Naive thymus-derived CD4-positive, alpha-beta T cell (primary cell): ENCODE measurements at regions of chr17 and their contacts with region 1.

Region 1: DNA sequence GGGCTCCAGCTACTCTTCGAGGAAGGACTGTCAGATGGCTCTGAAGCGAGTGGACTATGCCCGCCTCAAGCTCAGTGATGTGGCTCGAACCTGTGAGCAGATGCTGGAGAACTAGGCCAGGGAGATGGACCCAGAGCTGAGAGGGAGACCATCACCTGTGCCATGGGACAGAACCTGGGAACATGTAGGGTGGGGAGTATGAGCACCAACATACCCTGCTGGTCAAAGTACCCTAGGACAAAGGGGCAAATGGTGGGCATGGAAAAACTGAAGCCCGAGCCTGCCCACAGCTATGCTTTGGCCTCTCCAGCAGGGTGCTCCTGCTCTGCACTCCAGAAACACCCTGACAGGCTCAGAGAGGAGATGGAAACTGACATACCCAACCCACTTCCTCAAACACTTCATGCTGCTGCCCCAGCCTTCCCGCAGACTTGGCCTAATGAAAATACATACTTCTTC is 1.9 kb downstream of the MED11 start:
- DNase-seq: no peak
- ATAC-seq: peak; percentile 40
- H3K4me3 ChIP-seq: no peak overlapping the region
- H3K4me3 Mint-ChIP-seq: peak overlapping the region in 8 of 10 donors; percentile 8 to 99 (median 44)
- H3K27ac ChIP-seq: no peak overlapping the region
- H3K27ac Mint-ChIP-seq: peak overlapping the region in 4 of 9 donors; percentile 25 to 55 (median 44)
- H3K4me1 ChIP-seq: peaks cover 10 to 14% of the 10 kb centered on the region in 2 donors
- H3K4me1 Mint-ChIP-seq: peaks cover 4 to 39% (median 28%) of the 10 kb centered on the region in 7 donors
- H3K27me3 ChIP-seq: no peaks in the 10 kb centered on the region
- H3K27me3 Mint-ChIP-seq: peaks cover 0 to 6% (median 0%) of the 10 kb centered on the region in 5 donors

Region 2: GRCh38 chr17:4554997-4555799 is 177.9 kb before region 1 on chr17 and contains the start of gene MYBBP1A:
- CTCF ChIA-PET with region 1: no interaction called
- POLR2A ChIA-PET with region 1: no interaction called
- intact Hi-C with region 1: loop called in 1 of 2 experiments (anchors 1 kb)
- DNase-seq: peak; percentile 92 to 98 (median 95)
- ATAC-seq: peak; percentile 96
- H3K4me3 ChIP-seq: peak within 1 kb of the TSS; percentile 87
- H3K4me3 Mint-ChIP-seq: peak within 1 kb of the TSS; percentile 87 to 97 (median 95)
- H3K27ac ChIP-seq: peak within 1 kb of the TSS; percentile 79
- H3K27ac Mint-ChIP-seq: peak within 1 kb of the TSS; percentile 88 to 98 (median 96)
- H3K4me1 ChIP-seq: peaks cover 20% of the 10 kb centered on the region in 2 donors
- H3K4me1 Mint-ChIP-seq: peaks cover 16 to 34% (median 27%) of the 10 kb centered on the region in 7 donors
- H3K27me3 ChIP-seq: no peaks in the 10 kb centered on the region
- H3K27me3 Mint-ChIP-seq: no peaks in the 10 kb centered on the region
- total RNA-seq, gene MYBBP1A: 59.8 to 81.8 (median 77.9) TPM

Region 3: GRCh38 chr17:4789901-4790704 is 57.0 kb after region 1 on chr17:
- CTCF ChIA-PET with region 1: interaction called, 10 read pairs
- POLR2A ChIA-PET with region 1: interaction called, 9 read pairs
- intact Hi-C with region 1: loop called (anchors 1 kb)
- DNase-seq: peak; percentile 66 to 87 (median 78)
- ATAC-seq: peak; percentile 93
- H3K4me3 ChIP-seq: peak overlapping the region; percentile 75
- H3K4me3 Mint-ChIP-seq: peak overlapping the region; percentile 67 to 94 (median 88)
- H3K27ac ChIP-seq: peak overlapping the region; percentile 73
- H3K27ac Mint-ChIP-seq: peak overlapping the region; percentile 1 to 93 (median 89)
- H3K4me1 ChIP-seq: peaks cover 15 to 20% of the 10 kb centered on the region in 2 donors
- H3K4me1 Mint-ChIP-seq: peaks cover 11 to 34% (median 19%) of the 10 kb centered on the region in 7 donors
- H3K27me3 ChIP-seq: peaks cover 0 to 11% of the 10 kb centered on the region in 2 donors
- H3K27me3 Mint-ChIP-seq: peaks cover 23 to 49% (median 31%) of the 10 kb centered on the region in 5 donors

Region 4: GRCh38 chr17:4833178-4833940 is 100.3 kb after region 1 on chr17 and contains the start of gene MINK1:
- CTCF ChIA-PET with region 1: no interaction called
- POLR2A ChIA-PET with region 1: no interaction called
- intact Hi-C with region 1: loop called (anchors 1 kb)
- DNase-seq: peak; percentile 80 to 89 (median 85)
- ATAC-seq: peak; percentile 96
- H3K4me3 ChIP-seq: peak within 1 kb of the TSS; percentile 87
- H3K4me3 Mint-ChIP-seq: peak within 1 kb of the TSS; percentile 89 to 99 (median 96)
- H3K27ac ChIP-seq: peak within 1 kb of the TSS; percentile 85
- H3K27ac Mint-ChIP-seq: peak within 1 kb of the TSS; percentile 82 to 97 (median 92)
- H3K4me1 ChIP-seq: peaks cover 14 to 27% of the 10 kb centered on the region in 2 donors
- H3K4me1 Mint-ChIP-seq: peaks cover 34 to 42% (median 38%) of the 10 kb centered on the region in 7 donors
- H3K27me3 ChIP-seq: no peaks in the 10 kb centered on the region
- H3K27me3 Mint-ChIP-seq: peaks cover 0 to 5% (median 0%) of the 10 kb centered on the region in 5 donors
- total RNA-seq, gene MINK1: 88.8 to 142 (median 125) TPM

Region 5: GRCh38 chr17:4903051-4903818 is 170.1 kb after region 1 on chr17 and contains the start of gene CHRNE:
- CTCF ChIA-PET with region 1: no interaction called
- POLR2A ChIA-PET with region 1: no interaction called
- intact Hi-C with region 1: loop called in 1 of 2 experiments (anchors 1 kb)
- DNase-seq: peak in 8 of 9 donors; percentile 63 to 80 (median 76)
- ATAC-seq: peak; percentile 41
- H3K4me3 ChIP-seq: peak within 1 kb of the TSS; percentile 29
- H3K4me3 Mint-ChIP-seq: peak within 1 kb of the TSS; percentile 37 to 84 (median 72)
- H3K27ac ChIP-seq: no peak within 1 kb of the TSS
- H3K27ac Mint-ChIP-seq: peak within 1 kb of the TSS; percentile 57 to 98 (median 71)
- H3K4me1 ChIP-seq: peaks cover 29 to 40% of the 10 kb centered on the region in 2 donors
- H3K4me1 Mint-ChIP-seq: peaks cover 14 to 46% (median 37%) of the 10 kb centered on the region in 7 donors
- H3K27me3 ChIP-seq: no peaks in the 10 kb centered on the region
- H3K27me3 Mint-ChIP-seq: peaks cover 0 to 20% (median 0%) of the 10 kb centered on the region in 5 donors
- total RNA-seq, gene CHRNE: 0.34 to 6.5 (median 1.0) TPM

Region 6: GRCh38 chr17:5111402-5112204 is 378.5 kb after region 1 on chr17 and contains the start of gene ZNF232:
- CTCF ChIA-PET with region 1: no interaction called
- POLR2A ChIA-PET with region 1: no interaction called
- intact Hi-C with region 1: loop called in 1 of 2 experiments (anchors 5 kb)
- DNase-seq: peak; percentile 83 to 95 (median 87)
- ATAC-seq: peak; percentile 94
- H3K4me3 ChIP-seq: peak within 1 kb of the TSS; percentile 80
- H3K4me3 Mint-ChIP-seq: peak within 1 kb of the TSS; percentile 82 to 96 (median 92)
- H3K27ac ChIP-seq: peak within 1 kb of the TSS; percentile 74
- H3K27ac Mint-ChIP-seq: peak within 1 kb of the TSS; percentile 59 to 96 (median 88)
- H3K4me1 ChIP-seq: peaks cover 9% of the 10 kb centered on the region in 2 donors
- H3K4me1 Mint-ChIP-seq: peaks cover 14 to 48% (median 36%) of the 10 kb centered on the region in 7 donors
- H3K27me3 ChIP-seq: peaks cover 0 to 3% of the 10 kb centered on the region in 2 donors
- H3K27me3 Mint-ChIP-seq: peaks cover 12 to 19% (median 16%) of the 10 kb centered on the region in 5 donors
- total RNA-seq, gene ZNF232: 5.1 to 20.3 (median 11.2) TPM